CD4-positive, alpha-beta memory T cell (primary cell): ENCODE measurements at regions of chrX and their contacts with region 1.

Region 1: GRCh38 chrX:119482481-119483480 is 14.5 kb downstream of the SLC25A5 start:
- DNase-seq: peak; percentile 52 to 64 (median 60)
- H3K4me3 ChIP-seq: peak overlapping the region; percentile 12 to 43
- H3K4me3 Mint-ChIP-seq: peak overlapping the region; percentile 78 to 87 (median 84)
- H3K27ac ChIP-seq: peak overlapping the region; percentile 12
- H3K27ac Mint-ChIP-seq: peak overlapping the region; percentile 30 to 84 (median 83)
- H3K4me1 ChIP-seq: peaks cover 5% of the 10 kb centered on the region
- H3K4me1 Mint-ChIP-seq: peaks cover 1 to 10% (median 7%) of the 10 kb centered on the region in 4 donors
- H3K27me3 ChIP-seq: no peaks in the 10 kb centered on the region
- H3K27me3 Mint-ChIP-seq: no peaks in the 10 kb centered on the region

Region 2: GRCh38 chrX:119495734-119496726 is 13.2 kb after region 1 on chrX:
- CTCF ChIA-PET with region 1: interaction called, 56 read pairs
- POLR2A ChIA-PET with region 1: no interaction called
- intact Hi-C with region 1: no loop called
- DNase-seq: peak in 3 of 5 donors; percentile 14 to 25 (median 16)
- H3K4me3 ChIP-seq: no peak overlapping the region
- H3K4me3 Mint-ChIP-seq: peak overlapping the region in 2 of 8 donors; percentile 40 to 55
- H3K27ac ChIP-seq: no peak overlapping the region
- H3K27ac Mint-ChIP-seq: peak overlapping the region in 4 of 7 donors; percentile 42 to 88 (median 58)
- H3K4me1 ChIP-seq: peaks cover 13% of the 10 kb centered on the region
- H3K4me1 Mint-ChIP-seq: peaks cover 2 to 13% (median 10%) of the 10 kb centered on the region in 4 donors
- H3K27me3 ChIP-seq: no peaks in the 10 kb centered on the region
- H3K27me3 Mint-ChIP-seq: no peaks in the 10 kb centered on the region

Region 3: GRCh38 chrX:119809185-119809666 is 326.4 kb after region 1 on chrX:
- CTCF ChIA-PET with region 1: no interaction called
- POLR2A ChIA-PET with region 1: no interaction called
- intact Hi-C with region 1: no loop called
- DNase-seq: no peak
- H3K4me3 ChIP-seq: no peak overlapping the region
- H3K4me3 Mint-ChIP-seq: no peak overlapping the region
- H3K27ac ChIP-seq: no peak overlapping the region
- H3K27ac Mint-ChIP-seq: no peak overlapping the region
- H3K4me1 ChIP-seq: no peaks in the 10 kb centered on the region
- H3K4me1 Mint-ChIP-seq: no peaks in the 10 kb centered on the region
- H3K27me3 ChIP-seq: no peaks in the 10 kb centered on the region
- H3K27me3 Mint-ChIP-seq: no peaks in the 10 kb centered on the region